PC-9 (cell line): ENCODE measurements at regions of chr6 and their contacts with region 1.

Region 1: DNA sequence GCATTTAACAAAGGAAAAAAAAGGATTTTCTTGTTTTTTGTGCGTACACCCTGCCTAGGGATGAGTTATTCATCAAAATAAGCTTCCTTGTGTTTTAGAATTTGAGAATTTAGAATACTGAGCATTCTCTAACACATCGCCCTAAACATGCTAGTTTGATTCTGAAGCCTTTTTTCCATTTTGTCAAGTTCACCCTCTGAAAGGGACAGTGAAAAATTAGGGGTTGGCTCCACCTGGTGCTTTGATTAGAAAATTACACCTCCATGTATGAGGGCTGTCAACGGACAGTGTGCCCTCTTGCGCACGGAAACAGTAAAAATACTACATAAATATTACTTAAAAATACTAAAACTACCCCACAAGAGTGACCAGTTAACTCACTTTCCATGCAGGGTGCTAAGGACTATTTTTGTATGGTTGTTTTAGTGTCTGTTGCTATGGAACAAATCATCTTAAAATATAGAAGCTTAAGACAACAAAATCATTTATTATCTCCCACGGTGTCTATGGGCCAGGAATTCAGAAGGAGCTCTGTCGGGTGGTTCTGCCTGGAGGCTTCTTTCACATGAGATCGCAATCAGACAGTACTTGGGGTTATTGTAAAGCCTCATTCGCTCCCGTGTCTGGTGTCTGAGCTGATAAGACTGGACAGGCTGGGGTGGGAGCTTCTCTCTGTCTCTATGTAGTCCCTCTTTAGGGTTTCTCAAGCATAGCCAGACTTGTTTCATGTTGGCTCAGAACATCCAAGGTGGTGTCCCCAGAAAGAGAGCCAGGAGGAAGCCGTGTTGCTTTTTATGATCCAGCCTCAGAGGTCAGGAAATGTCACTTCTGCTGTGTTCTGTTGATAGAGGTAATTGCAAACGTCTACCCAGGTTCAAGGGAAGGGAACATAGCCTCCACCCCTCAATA is 41.1 kb upstream of the TMEM170B start:
- DNase-seq: peak; percentile 63 to 77
- H3K4me3 ChIP-seq: no peak overlapping the region
- H3K27ac ChIP-seq: peak overlapping the region; percentile 49
- H3K4me1 ChIP-seq: peaks cover 12% of the 10 kb centered on the region
- H3K27me3 ChIP-seq: no peaks in the 10 kb centered on the region
- CTCF ChIP-seq: peak; percentile 87

Region 2: GRCh38 chr6:11093589-11094410 is 402.6 kb before region 1 on chr6 and contains the start of gene SMIM13:
- CTCF ChIA-PET with region 1: interaction called, 4 read pairs
- POLR2A ChIA-PET with region 1: interaction called, 6 read pairs
- intact Hi-C with region 1: loop called (anchors 1 kb)
- DNase-seq: peak; percentile 88 to 96
- H3K4me3 ChIP-seq: peak within 1 kb of the TSS; percentile 76
- H3K27ac ChIP-seq: peak within 1 kb of the TSS; percentile 64
- H3K4me1 ChIP-seq: 0 out of 2 replicates have a peak, but pooled peaks cover 8% of the 10 kb centered on the region
- H3K27me3 ChIP-seq: no peaks in the 10 kb centered on the region
- CTCF ChIP-seq: peak; percentile 56
- total RNA-seq, gene SMIM13: 16.7 and 22.2 TPM in 2 replicates

Region 3: DNA sequence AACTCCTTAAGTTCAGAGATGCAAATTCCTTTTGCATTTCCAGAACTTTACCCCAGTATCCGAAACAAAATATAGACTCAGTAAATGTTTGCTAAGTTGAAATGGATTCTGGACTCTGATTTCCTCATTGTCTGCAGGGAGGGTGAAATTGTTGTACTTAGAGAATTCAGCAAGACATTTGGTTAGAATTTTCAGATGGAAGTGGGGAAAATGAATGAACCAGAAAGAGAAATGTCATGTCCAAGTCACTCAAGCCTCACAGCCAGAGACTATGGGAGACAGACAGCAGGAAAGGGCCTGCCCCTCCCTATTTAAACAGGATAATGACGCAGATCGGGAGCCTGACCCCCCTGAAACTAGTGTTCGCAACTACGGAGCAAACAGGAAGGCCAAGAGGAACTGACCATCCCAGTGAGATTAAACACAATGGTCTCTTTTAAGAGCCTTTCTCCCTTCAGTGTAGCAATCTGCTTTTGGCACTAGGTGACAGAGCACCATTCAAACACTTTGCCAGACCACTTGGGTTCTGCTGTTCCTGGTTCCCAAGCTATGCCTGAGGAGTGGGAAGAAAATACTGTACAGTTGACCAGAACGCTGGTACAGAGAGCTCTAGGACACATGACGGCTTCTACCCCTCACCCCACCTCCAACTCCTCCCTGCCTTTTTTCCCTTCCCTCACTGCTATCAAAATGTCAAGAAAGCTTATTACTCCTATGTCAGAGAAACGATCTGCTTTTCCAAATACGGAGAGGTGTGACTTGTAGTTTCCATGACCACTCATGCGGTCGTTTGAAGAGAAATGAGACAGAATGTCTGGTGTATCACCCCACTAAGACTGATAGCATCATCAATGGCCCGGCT is 277.6 kb before region 1 on chr6:
- CTCF ChIA-PET with region 1: no interaction called
- POLR2A ChIA-PET with region 1: interaction called, 16 read pairs
- intact Hi-C with region 1: no loop called
- DNase-seq: no peak
- H3K4me3 ChIP-seq: no peak overlapping the region
- H3K27ac ChIP-seq: no peak overlapping the region
- H3K4me1 ChIP-seq: peaks cover 4% of the 10 kb centered on the region
- H3K27me3 ChIP-seq: no peaks in the 10 kb centered on the region
- CTCF ChIP-seq: no peak

Region 4: GRCh38 chr6:11392778-11393507 is 103.5 kb before region 1 on chr6:
- CTCF ChIA-PET with region 1: interaction called, 8 read pairs
- POLR2A ChIA-PET with region 1: no interaction called
- intact Hi-C with region 1: loop called (anchors 1 kb)
- DNase-seq: peak; percentile 75 to 77
- H3K4me3 ChIP-seq: no peak overlapping the region; the same call in 1 of the 2 replicates
- H3K27ac ChIP-seq: peak overlapping the region; percentile 89
- H3K4me1 ChIP-seq: peaks cover 63% of the 10 kb centered on the region
- H3K27me3 ChIP-seq: no peaks in the 10 kb centered on the region
- CTCF ChIP-seq: no peak

Region 5: GRCh38 chr6:11434565-11435326 is 61.7 kb before region 1 on chr6:
- CTCF ChIA-PET with region 1: interaction called, 7 read pairs
- POLR2A ChIA-PET with region 1: interaction called, 5 read pairs
- intact Hi-C with region 1: loop called (anchors 2 kb)
- DNase-seq: peak; percentile 79 to 98
- H3K4me3 ChIP-seq: no peak overlapping the region
- H3K27ac ChIP-seq: peak overlapping the region; percentile 87
- H3K4me1 ChIP-seq: peaks cover 52% of the 10 kb centered on the region
- H3K27me3 ChIP-seq: no peaks in the 10 kb centered on the region
- CTCF ChIP-seq: no peak

Region 6: DNA sequence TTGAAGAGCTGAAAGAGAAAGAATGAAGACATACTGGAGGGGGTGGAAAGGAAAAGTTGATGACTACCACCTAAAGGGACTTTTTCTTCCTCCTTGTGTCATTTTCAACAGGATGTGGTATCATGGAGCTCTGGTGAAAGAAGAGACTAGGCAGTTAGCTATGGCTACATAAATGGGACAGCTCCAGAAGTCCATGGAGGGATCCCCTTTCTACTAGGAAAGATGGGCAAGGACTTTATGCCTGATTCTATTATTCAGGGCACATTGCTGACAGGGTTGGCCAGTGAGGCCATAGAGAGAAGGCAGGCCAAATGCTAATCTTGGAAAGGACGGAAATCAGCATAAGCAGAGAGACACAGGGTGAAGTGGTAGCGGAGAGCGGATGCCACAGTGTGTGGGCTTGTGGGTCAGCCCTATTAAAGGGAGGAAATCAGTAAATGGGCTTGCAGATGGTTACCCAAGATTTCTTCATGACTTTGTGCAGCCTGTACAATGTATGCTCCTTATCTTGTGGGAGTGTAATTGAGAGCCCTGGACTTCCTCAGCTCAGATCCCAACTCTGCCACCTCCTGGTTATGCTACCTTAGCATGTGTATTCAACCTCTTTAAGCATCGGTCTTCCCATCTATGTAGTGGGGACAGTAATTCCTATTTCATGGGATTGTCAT is 36.3 kb before region 1 on chr6:
- CTCF ChIA-PET with region 1: no interaction called
- POLR2A ChIA-PET with region 1: no interaction called
- intact Hi-C with region 1: no loop called
- DNase-seq: no peak
- H3K4me3 ChIP-seq: no peak overlapping the region
- H3K27ac ChIP-seq: no peak overlapping the region
- H3K4me1 ChIP-seq: no peaks in the 10 kb centered on the region
- H3K27me3 ChIP-seq: no peaks in the 10 kb centered on the region
- CTCF ChIP-seq: no peak

Region 7: GRCh38 chr6:11525468-11526155 is 29.2 kb after region 1 on chr6:
- CTCF ChIA-PET with region 1: no interaction called
- POLR2A ChIA-PET with region 1: no interaction called
- intact Hi-C with region 1: no loop called
- DNase-seq: peak in 1 of 2 experiments; percentile 68
- H3K4me3 ChIP-seq: no peak overlapping the region
- H3K27ac ChIP-seq: peak overlapping the region; percentile 16; the same call in 1 of the 2 replicates
- H3K4me1 ChIP-seq: peaks cover 9% of the 10 kb centered on the region
- H3K27me3 ChIP-seq: no peaks in the 10 kb centered on the region
- CTCF ChIP-seq: no peak